Common myeloid progenitor, CD34-positive (primary cell): ENCODE measurements at regions of chr14 and their contacts with region 1.

Region 1: GRCh38 chr14:103904493-103905107 is 23.7 kb upstream of the TDRD9 start:
- DNase-seq: no peak
- H3K4me3 ChIP-seq: no peak overlapping the region
- H3K27ac ChIP-seq: no peak overlapping the region
- H3K4me1 ChIP-seq: peaks cover 2 to 7% (median 4%) of the 10 kb centered on the region in 4 experiments
- H3K27me3 ChIP-seq: no peaks in the 10 kb centered on the region

Region 2: DNA sequence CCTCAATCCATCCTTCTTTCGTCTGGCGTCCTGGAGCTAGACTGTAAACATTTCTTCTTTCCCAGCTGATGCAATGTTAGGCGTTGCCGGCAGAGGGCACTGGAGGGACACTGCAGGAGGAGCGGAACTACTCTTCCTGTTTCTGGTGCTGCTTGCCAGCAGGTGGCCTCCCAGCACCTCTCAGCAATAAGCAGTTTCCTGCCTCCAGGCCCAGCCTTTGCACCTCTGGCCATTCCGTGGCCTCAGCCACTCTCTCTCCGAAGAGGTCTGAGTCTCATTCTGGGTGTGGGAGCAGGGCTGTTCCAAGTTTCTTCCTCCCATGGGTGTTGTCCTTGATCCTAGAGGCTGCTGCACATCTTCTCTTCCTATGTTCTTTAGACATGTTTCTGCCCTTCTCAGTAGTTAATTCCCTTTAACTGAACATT is 173.4 kb after region 1 on chr14:
- CTCF ChIA-PET with region 1: interaction called, 11 read pairs
- POLR2A ChIA-PET with region 1: no interaction called
- DNase-seq: peak; percentile 88 to 93 (median 91)
- H3K4me3 ChIP-seq: no peak overlapping the region
- H3K27ac ChIP-seq: no peak overlapping the region
- H3K4me1 ChIP-seq: peaks cover 0 to 2% (median 1%) of the 10 kb centered on the region in 4 experiments
- H3K27me3 ChIP-seq: peaks cover 0 to 4% (median 0%) of the 10 kb centered on the region in 5 experiments